IMR-90 (cell line): ENCODE measurements at regions of chr2 and their contacts with region 1.

Region 1: GRCh38 chr2:207746131-207746530 is 23.6 kb downstream of the FZD5 start:
- DNase-seq: peak; percentile 79
- ATAC-seq: peak; percentile 75
- H3K4me3 ChIP-seq: no peak overlapping the region
- H3K27ac ChIP-seq: no peak overlapping the region
- H3K4me1 ChIP-seq: peaks cover 12% of the 10 kb centered on the region
- H3K27me3 ChIP-seq: no peaks in the 10 kb centered on the region
- CTCF ChIP-seq: peak; percentile 97
- POLR2A ChIP-seq: peak; percentile 61
- RAD21 ChIP-seq: peak; percentile 100

Region 2: DNA sequence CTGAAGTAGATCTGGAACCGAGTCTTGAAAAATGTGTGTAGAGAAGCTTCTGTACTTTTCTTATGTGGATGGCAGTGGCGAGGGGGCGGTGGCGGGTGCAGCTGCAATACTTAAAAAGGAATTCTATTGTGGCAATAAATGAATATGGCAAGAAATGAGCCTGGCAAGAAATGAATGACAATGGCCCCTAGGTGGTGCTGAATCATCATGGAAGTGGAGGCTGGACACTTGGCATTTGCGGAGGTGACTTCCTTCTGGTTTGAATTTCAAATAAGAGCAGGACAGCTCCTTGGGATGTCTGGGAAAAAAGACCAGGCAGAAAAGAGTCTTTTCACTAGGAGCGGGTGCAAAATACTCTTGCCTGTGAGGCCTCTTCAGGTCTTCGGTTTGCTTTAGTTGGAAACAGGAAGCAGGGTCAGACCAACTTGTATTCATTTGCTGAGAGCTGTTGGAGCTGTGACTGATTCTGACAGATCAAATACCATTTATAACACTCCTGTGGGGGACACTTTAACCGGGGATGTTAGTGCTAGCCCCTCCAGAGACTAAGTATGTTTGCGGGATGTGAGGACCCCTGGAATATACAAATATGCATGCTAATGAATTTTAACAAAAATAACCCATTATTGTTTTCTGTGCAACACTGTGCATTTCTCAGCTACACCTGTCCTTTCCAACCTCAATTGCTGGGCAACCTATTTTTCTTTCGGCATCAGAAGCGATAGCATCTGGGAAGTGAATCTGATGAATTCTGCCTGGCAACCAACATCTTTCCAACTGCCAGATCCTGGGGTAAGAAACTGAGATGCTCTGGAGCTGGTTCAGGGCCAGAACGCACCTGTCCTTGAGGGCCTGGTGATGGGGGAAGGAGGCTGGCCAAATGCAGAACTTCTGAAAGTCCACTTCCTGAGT is 945.4 kb before region 1 on chr2:
- CTCF ChIA-PET with region 1: no interaction called
- POLR2A ChIA-PET with region 1: no interaction called
- dilution Hi-C with region 1: no loop called
- in situ Hi-C with region 1: loop called (anchors 25 kb)
- intact Hi-C with region 1: loop called (anchors 10 kb)
- DNase-seq: peak; percentile 76
- ATAC-seq: peak; percentile 82
- H3K4me3 ChIP-seq: no peak overlapping the region
- H3K27ac ChIP-seq: no peak overlapping the region
- H3K4me1 ChIP-seq: no peaks in the 10 kb centered on the region
- H3K27me3 ChIP-seq: no peaks in the 10 kb centered on the region
- CTCF ChIP-seq: peak; percentile 76
- POLR2A ChIP-seq: no peak
- RAD21 ChIP-seq: peak; percentile 90

Region 3: GRCh38 chr2:207546822-207547221 is 199.3 kb before region 1 on chr2:
- CTCF ChIA-PET with region 1: no interaction called
- POLR2A ChIA-PET with region 1: no interaction called
- dilution Hi-C with region 1: no loop called
- in situ Hi-C with region 1: no loop called
- intact Hi-C with region 1: no loop called
- DNase-seq: no peak
- ATAC-seq: no peak
- H3K4me3 ChIP-seq: no peak overlapping the region
- H3K27ac ChIP-seq: no peak overlapping the region
- H3K4me1 ChIP-seq: peaks cover 8% of the 10 kb centered on the region
- H3K27me3 ChIP-seq: no peaks in the 10 kb centered on the region
- CTCF ChIP-seq: no peak
- POLR2A ChIP-seq: no peak
- RAD21 ChIP-seq: no peak

Region 4: GRCh38 chr2:207792244-207792785 is 46.2 kb after region 1 on chr2:
- CTCF ChIA-PET with region 1: no interaction called
- POLR2A ChIA-PET with region 1: no interaction called
- dilution Hi-C with region 1: no loop called
- in situ Hi-C with region 1: no loop called
- intact Hi-C with region 1: no loop called
- DNase-seq: peak; percentile 66
- ATAC-seq: peak; percentile 88
- H3K4me3 ChIP-seq: no peak overlapping the region
- H3K27ac ChIP-seq: no peak overlapping the region
- H3K4me1 ChIP-seq: peaks cover 7% of the 10 kb centered on the region
- H3K27me3 ChIP-seq: no peaks in the 10 kb centered on the region; the same call in 1 of the 2 replicates
- CTCF ChIP-seq: no peak
- POLR2A ChIP-seq: no peak
- RAD21 ChIP-seq: no peak

Region 5: DNA sequence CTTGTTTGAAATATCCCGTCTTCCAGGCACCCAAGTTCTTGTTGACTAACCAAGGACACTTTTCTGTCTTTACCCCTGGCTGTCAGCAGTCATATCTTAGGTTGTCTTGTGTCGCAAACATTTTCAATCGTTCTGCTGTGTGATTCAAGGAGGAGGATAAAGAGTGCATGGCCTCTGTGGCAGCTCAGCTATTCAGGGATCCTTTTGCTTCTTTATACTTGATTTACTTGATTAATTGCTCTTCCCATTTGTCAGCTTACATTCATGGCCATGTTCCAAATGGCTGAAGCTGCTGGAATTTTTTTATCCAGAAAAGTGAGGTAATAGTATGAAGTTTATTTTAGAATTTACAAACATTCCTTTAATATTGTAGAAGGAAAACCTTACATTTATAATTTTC is 120.9 kb after region 1 on chr2:
- CTCF ChIA-PET with region 1: no interaction called
- POLR2A ChIA-PET with region 1: no interaction called
- dilution Hi-C with region 1: no loop called
- in situ Hi-C with region 1: no loop called
- intact Hi-C with region 1: no loop called
- DNase-seq: peak; percentile 19
- ATAC-seq: no peak
- H3K4me3 ChIP-seq: no peak overlapping the region
- H3K27ac ChIP-seq: no peak overlapping the region
- H3K4me1 ChIP-seq: peaks cover 4% of the 10 kb centered on the region; the same call in 1 of the 2 replicates
- H3K27me3 ChIP-seq: no peaks in the 10 kb centered on the region
- CTCF ChIP-seq: no peak
- POLR2A ChIP-seq: no peak
- RAD21 ChIP-seq: no peak

Region 6: GRCh38 chr2:208033758-208034502 is 287.8 kb after region 1 on chr2:
- CTCF ChIA-PET with region 1: no interaction called
- POLR2A ChIA-PET with region 1: no interaction called
- dilution Hi-C with region 1: no loop called
- in situ Hi-C with region 1: loop called (anchors 10 kb)
- intact Hi-C with region 1: no loop called
- DNase-seq: peak; percentile 24
- ATAC-seq: no peak
- H3K4me3 ChIP-seq: no peak overlapping the region
- H3K27ac ChIP-seq: no peak overlapping the region
- H3K4me1 ChIP-seq: no peaks in the 10 kb centered on the region; the same call in 1 of the 2 replicates
- H3K27me3 ChIP-seq: no peaks in the 10 kb centered on the region
- CTCF ChIP-seq: peak; percentile 24; the same call in 1 of the 2 replicates
- POLR2A ChIP-seq: no peak
- RAD21 ChIP-seq: 0 out of 2 replicates have a peak, but pooled peaks have one; percentile 18

Region 7: GRCh38 chr2:208072250-208072892 is 326.2 kb after region 1 on chr2:
- CTCF ChIA-PET with region 1: interaction called, 15 read pairs
- POLR2A ChIA-PET with region 1: no interaction called
- dilution Hi-C with region 1: no loop called
- in situ Hi-C with region 1: loop called (anchors 5 kb)
- intact Hi-C with region 1: loop called (anchors 1 kb)
- DNase-seq: peak; percentile 72
- ATAC-seq: peak; percentile 93
- H3K4me3 ChIP-seq: no peak overlapping the region
- H3K27ac ChIP-seq: no peak overlapping the region
- H3K4me1 ChIP-seq: no peaks in the 10 kb centered on the region
- H3K27me3 ChIP-seq: peaks cover 5% of the 10 kb centered on the region
- CTCF ChIP-seq: peak; percentile 85
- POLR2A ChIP-seq: 0 out of 2 replicates have a peak, but pooled peaks have one; percentile 42
- RAD21 ChIP-seq: peak; percentile 98

Region 8: GRCh38 chr2:209277444-209277843 is 1531.3 kb after region 1 on chr2:
- CTCF ChIA-PET with region 1: no interaction called
- POLR2A ChIA-PET with region 1: no interaction called
- dilution Hi-C with region 1: no loop called
- in situ Hi-C with region 1: no loop called
- intact Hi-C with region 1: no loop called
- DNase-seq: no peak
- ATAC-seq: no peak
- H3K4me3 ChIP-seq: no peak overlapping the region
- H3K27ac ChIP-seq: no peak overlapping the region
- H3K4me1 ChIP-seq: no peaks in the 10 kb centered on the region
- H3K27me3 ChIP-seq: no peaks in the 10 kb centered on the region
- CTCF ChIP-seq: no peak
- POLR2A ChIP-seq: no peak
- RAD21 ChIP-seq: no peak